AG04450 (cell line): ENCODE measurements at regions of chr22 and their contacts with region 1.

Region 1: GRCh38 chr22:22201185-22201929 is 43.2 kb upstream of the VPREB1 start:
- DNase-seq: peak; percentile 21
- H3K4me3 ChIP-seq: no peak overlapping the region
- H3K27ac ChIP-seq: no peak overlapping the region
- H3K27me3 ChIP-seq: peaks cover 30% of the 10 kb centered on the region
- CTCF ChIP-seq: peak; percentile 86

Region 2: GRCh38 chr22:22184277-22184807 is 17.0 kb before region 1 on chr22:
- CTCF ChIA-PET with region 1: interaction called, 15 read pairs
- POLR2A ChIA-PET with region 1: no interaction called
- DNase-seq: no peak
- H3K4me3 ChIP-seq: no peak overlapping the region
- H3K27ac ChIP-seq: no peak overlapping the region
- H3K27me3 ChIP-seq: peaks cover 18% of the 10 kb centered on the region
- CTCF ChIP-seq: no peak

Region 3: DNA sequence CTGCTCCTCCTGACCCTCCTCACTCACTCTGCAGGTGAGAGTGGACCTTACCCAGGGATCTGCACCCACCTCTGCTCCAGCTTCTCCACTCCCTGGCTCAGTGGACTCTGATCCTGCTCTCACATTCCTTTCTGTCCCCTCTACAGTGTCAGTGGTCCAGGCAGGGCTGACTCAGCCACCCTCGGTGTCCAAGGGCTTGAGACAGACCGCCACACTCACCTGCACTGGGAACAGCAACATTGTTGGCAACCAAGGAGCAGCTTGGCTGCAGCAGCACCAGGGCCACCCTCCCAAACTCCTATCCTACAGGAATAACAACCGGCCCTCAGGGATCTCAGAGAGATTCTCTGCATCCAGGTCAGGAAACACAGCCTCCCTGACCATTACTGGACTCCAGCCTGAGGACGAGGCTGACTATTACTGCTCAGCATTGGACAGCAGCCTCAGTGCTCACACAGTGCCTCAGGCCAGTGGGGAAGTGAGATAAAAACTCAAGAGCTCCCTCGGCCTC is 13.5 kb after region 1 on chr22:
- CTCF ChIA-PET with region 1: interaction called, 17 read pairs
- POLR2A ChIA-PET with region 1: no interaction called
- DNase-seq: no peak
- H3K4me3 ChIP-seq: no peak overlapping the region
- H3K27ac ChIP-seq: no peak overlapping the region
- H3K27me3 ChIP-seq: peaks cover 13% of the 10 kb centered on the region
- CTCF ChIP-seq: no peak

Region 4: GRCh38 chr22:22235558-22235957 is 34.2 kb after region 1 on chr22:
- CTCF ChIA-PET with region 1: interaction called, 21 read pairs
- POLR2A ChIA-PET with region 1: no interaction called
- DNase-seq: no peak
- H3K4me3 ChIP-seq: no peak overlapping the region
- H3K27ac ChIP-seq: no peak overlapping the region
- H3K27me3 ChIP-seq: peaks cover 5% of the 10 kb centered on the region
- CTCF ChIP-seq: peak; percentile 41